Right cardiac atrium (tissue), 5 donors: ENCODE measurements at regions of chr22 and their contacts with region 1.

Region 1: GRCh38 chr22:38403812-38404211 is 51.2 kb downstream of the KCNJ4 start:
- DNase-seq: no peak
- ATAC-seq: no peak
- H3K4me3 ChIP-seq: no peak overlapping the region
- H3K27ac ChIP-seq: no peak overlapping the region
- H3K4me1 ChIP-seq: no peaks in the 10 kb centered on the region
- H3K27me3 ChIP-seq: no peaks in the 10 kb centered on the region

Region 2: GRCh38 chr22:38272373-38273134 is 131.3 kb before region 1 on chr22 and contains the start of gene TMEM184B:
- intact Hi-C with region 1: no loop called
- DNase-seq: peak; percentile 78 to 94 (median 93)
- ATAC-seq: peak; percentile 91 to 94
- H3K4me3 ChIP-seq: peak within 1 kb of the TSS; percentile 91
- H3K27ac ChIP-seq: peak within 1 kb of the TSS; percentile 96
- H3K4me1 ChIP-seq: peaks cover 11% of the 10 kb centered on the region
- H3K27me3 ChIP-seq: no peaks in the 10 kb centered on the region
- total RNA-seq, gene TMEM184B: 48.2 to 55.8 (median 49.5) TPM

Region 3: GRCh38 chr22:38506118-38506962 is 102.5 kb after region 1 on chr22 and contains the start of gene DDX17:
- intact Hi-C with region 1: loop called in 1 of 4 experiments (anchors 10 kb)
- DNase-seq: peak; percentile 93 to 96 (median 96)
- ATAC-seq: peak; percentile 92 to 93
- H3K4me3 ChIP-seq: peak within 1 kb of the TSS; percentile 96
- H3K27ac ChIP-seq: peak within 1 kb of the TSS; percentile 100
- H3K4me1 ChIP-seq: peaks cover 2% of the 10 kb centered on the region
- H3K27me3 ChIP-seq: no peaks in the 10 kb centered on the region
- total RNA-seq, gene DDX17: 216 to 253 (median 238) TPM

Region 4: GRCh38 chr22:38601221-38601764 is 197.5 kb after region 1 on chr22:
- intact Hi-C with region 1: no loop called
- DNase-seq: no peak
- ATAC-seq: no peak
- H3K4me3 ChIP-seq: no peak overlapping the region
- H3K27ac ChIP-seq: no peak overlapping the region
- H3K4me1 ChIP-seq: no peaks in the 10 kb centered on the region
- H3K27me3 ChIP-seq: no peaks in the 10 kb centered on the region